ENCODE measurements at regions of chr22 and their contacts with region 1.

Region 1: DNA sequence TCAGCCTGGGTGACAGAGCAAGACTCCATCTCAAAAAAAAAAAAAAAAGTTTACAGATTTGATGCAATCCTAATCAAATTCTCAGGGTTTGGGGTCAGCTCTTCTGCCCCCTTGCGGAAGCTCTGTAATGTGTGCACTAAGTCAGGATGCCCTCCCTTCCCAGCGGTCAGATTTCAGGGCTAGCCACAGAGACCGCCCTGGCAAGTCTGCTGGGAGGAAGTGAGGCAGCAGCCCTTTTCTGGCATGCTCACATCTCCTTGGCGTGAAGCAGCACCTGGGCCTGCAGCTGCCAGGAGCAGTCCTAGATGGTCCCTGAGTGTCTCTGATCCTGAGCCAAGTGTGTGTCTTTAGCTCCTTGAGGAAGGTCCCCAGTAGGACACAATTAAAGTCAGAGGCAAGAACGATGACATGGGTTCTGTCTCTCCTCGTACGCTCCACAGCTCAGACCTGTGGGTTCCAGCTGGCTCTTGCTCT is 10.9 kb upstream of the APOBEC3C start:
- DNase-seq: peak; percentile 61 to 85 (median 68)
- H3K4me3 ChIP-seq: no peak overlapping the region
- H3K4me3 Mint-ChIP-seq: peak overlapping the region in 1 of 7 donors; percentile 6
- H3K27ac ChIP-seq: no peak overlapping the region
- H3K27ac Mint-ChIP-seq: peak overlapping the region in 7 of 8 donors; percentile 19 to 78 (median 66)
- H3K4me1 ChIP-seq: peaks cover 15% of the 10 kb centered on the region
- H3K4me1 Mint-ChIP-seq: peaks cover 10 to 15% (median 15%) of the 10 kb centered on the region in 3 donors
- H3K27me3 ChIP-seq: no peaks in the 10 kb centered on the region
- H3K27me3 Mint-ChIP-seq: peaks cover 4% of the 10 kb centered on the region in 2 donors

Region 2: GRCh38 chr22:38943201-38943600 is 60.0 kb before region 1 on chr22:
- CTCF ChIA-PET with region 1: no interaction called
- POLR2A ChIA-PET with region 1: no interaction called
- DNase-seq: no peak
- H3K4me3 ChIP-seq: no peak overlapping the region
- H3K4me3 Mint-ChIP-seq: peak overlapping the region in 3 of 7 donors; percentile 5 to 51 (median 23)
- H3K27ac ChIP-seq: no peak overlapping the region
- H3K27ac Mint-ChIP-seq: peak overlapping the region in 2 of 8 donors; percentile 36 to 56
- H3K4me1 ChIP-seq: peaks cover 8% of the 10 kb centered on the region
- H3K4me1 Mint-ChIP-seq: peaks cover 16 to 29% (median 19%) of the 10 kb centered on the region in 3 donors
- H3K27me3 ChIP-seq: peaks cover 22% of the 10 kb centered on the region
- H3K27me3 Mint-ChIP-seq: peaks cover 27 to 83% of the 10 kb centered on the region in 2 donors

Region 3: DNA sequence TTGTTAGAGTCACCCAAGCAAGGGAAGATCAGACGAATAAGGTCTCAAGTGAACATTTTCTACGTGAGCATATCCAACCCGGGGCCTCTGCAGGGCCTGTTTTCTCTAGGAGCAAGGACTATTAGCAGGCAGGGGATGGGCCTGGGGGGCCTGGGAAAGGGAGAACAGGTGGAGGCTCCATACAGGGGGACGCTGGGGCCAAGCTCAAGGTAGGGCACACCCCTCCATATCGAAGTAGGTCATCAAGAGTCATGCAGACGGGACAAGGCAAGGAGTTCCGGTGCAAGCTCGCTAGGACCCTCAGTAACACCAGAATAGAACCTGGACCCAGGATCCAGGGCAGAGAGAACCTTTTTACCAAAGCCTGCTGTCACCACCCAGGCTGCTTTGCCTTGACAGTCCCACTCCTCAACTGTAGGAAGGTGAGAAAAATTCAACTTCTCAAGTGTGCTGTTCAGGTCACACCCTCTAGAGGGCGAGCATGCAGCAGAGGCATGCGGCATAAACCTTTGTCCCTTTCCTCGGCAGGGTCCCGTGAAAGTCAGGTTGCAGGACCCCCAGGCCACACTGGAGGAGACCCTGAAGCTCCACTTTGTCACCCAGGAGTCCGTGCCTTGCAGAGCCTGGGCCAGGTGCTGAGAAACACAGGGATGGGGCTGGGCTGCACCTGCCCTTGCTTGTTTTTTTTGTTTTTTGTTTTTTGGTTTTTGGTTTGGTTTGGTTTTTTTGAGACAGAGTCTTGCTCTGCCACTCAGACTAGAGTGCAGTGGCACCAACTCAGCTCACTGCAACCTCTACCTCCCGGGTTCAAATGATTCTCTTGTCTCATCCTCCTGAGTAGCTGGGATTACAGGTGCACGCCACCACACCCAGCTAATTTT is 29.7 kb before region 1 on chr22:
- CTCF ChIA-PET with region 1: interaction called, 44 read pairs
- POLR2A ChIA-PET with region 1: no interaction called
- DNase-seq: peak; percentile 12 to 68 (median 24)
- H3K4me3 ChIP-seq: no peak overlapping the region
- H3K4me3 Mint-ChIP-seq: no peak overlapping the region
- H3K27ac ChIP-seq: no peak overlapping the region
- H3K27ac Mint-ChIP-seq: no peak overlapping the region
- H3K4me1 ChIP-seq: no peaks in the 10 kb centered on the region
- H3K4me1 Mint-ChIP-seq: peaks cover 2 to 5% (median 4%) of the 10 kb centered on the region in 3 donors
- H3K27me3 ChIP-seq: no peaks in the 10 kb centered on the region
- H3K27me3 Mint-ChIP-seq: peaks cover 12 to 14% of the 10 kb centered on the region in 2 donors

Region 4: DNA sequence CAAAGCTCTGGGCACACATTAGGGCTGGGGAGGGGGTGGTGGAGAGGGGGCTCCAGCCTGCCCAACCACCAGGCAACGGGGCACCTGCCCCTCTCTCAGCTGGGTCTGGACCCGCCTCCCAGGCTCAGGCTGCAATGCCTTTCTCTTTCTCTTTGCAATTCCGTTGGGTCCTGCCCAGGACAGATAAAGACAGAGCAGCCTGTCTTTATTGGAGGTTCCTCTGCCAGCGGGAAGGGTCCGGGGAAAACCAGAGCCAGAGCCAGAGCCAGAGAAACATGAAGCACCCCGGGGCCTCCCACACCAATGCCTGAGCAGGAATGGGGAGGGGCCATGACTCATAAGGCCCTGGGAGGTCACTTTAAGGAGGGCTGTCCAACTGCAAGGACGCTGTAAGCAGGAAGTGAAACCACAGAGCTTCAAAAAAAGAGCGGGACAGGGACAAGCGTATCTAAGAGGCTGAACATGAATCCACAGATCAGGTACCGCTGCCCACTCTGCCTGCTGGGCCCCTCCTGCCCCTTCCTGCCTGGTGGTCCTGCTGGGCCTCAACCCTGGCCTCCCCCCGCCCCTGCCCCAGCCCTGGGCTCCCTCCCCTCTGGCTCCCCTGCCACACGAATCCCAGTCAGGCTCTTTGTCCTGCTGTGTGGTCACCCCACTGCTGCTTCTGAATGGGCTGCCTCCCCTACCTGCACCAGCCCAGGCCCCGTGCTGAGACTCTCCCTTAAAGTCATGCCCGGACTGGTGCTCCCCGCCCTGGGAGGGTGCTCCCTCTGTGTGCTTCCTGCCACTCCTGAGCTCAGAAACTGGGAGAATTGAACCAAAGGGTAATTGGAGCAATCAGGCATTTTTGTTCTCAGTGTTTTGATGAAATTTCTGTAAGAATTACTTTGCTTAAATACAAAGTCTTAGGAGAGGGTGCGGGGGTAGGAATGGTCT is 20.9 kb before region 1 on chr22 and contains the start of gene APOBEC3B:
- CTCF ChIA-PET with region 1: interaction called, 33 read pairs
- POLR2A ChIA-PET with region 1: interaction called, 5 read pairs
- DNase-seq: peak; percentile 24 to 81 (median 58)
- H3K4me3 ChIP-seq: peak within 1 kb of the TSS; percentile 49
- H3K4me3 Mint-ChIP-seq: peak within 1 kb of the TSS; percentile 67 to 92 (median 87)
- H3K27ac ChIP-seq: no peak within 1 kb of the TSS
- H3K27ac Mint-ChIP-seq: peak within 1 kb of the TSS in 7 of 8 donors; percentile 36 to 92 (median 62)
- H3K4me1 ChIP-seq: peaks cover 19% of the 10 kb centered on the region
- H3K4me1 Mint-ChIP-seq: peaks cover 38 to 48% (median 44%) of the 10 kb centered on the region in 3 donors
- H3K27me3 ChIP-seq: no peaks in the 10 kb centered on the region
- H3K27me3 Mint-ChIP-seq: peaks cover 0 to 3% of the 10 kb centered on the region in 2 donors
- total RNA-seq, gene APOBEC3B: 6.7 to 7.3 TPM

Region 5: GRCh38 chr22:39117585-39118191 is 114.5 kb after region 1 on chr22:
- CTCF ChIA-PET with region 1: interaction called, 10 read pairs
- POLR2A ChIA-PET with region 1: interaction called, 5 read pairs
- DNase-seq: peak; percentile 53 to 83 (median 60)
- H3K4me3 ChIP-seq: peak overlapping the region; percentile 30
- H3K4me3 Mint-ChIP-seq: peak overlapping the region; percentile 64 to 80 (median 76)
- H3K27ac ChIP-seq: peak overlapping the region; percentile 70
- H3K27ac Mint-ChIP-seq: peak overlapping the region; percentile 90 to 98 (median 93)
- H3K4me1 ChIP-seq: peaks cover 22% of the 10 kb centered on the region
- H3K4me1 Mint-ChIP-seq: peaks cover 45 to 64% (median 57%) of the 10 kb centered on the region in 3 donors
- H3K27me3 ChIP-seq: no peaks in the 10 kb centered on the region
- H3K27me3 Mint-ChIP-seq: no peaks in the 10 kb centered on the region